K562 (cell line): ENCODE measurements at regions of chr1 and their contacts with region 1.

Region 1: DNA sequence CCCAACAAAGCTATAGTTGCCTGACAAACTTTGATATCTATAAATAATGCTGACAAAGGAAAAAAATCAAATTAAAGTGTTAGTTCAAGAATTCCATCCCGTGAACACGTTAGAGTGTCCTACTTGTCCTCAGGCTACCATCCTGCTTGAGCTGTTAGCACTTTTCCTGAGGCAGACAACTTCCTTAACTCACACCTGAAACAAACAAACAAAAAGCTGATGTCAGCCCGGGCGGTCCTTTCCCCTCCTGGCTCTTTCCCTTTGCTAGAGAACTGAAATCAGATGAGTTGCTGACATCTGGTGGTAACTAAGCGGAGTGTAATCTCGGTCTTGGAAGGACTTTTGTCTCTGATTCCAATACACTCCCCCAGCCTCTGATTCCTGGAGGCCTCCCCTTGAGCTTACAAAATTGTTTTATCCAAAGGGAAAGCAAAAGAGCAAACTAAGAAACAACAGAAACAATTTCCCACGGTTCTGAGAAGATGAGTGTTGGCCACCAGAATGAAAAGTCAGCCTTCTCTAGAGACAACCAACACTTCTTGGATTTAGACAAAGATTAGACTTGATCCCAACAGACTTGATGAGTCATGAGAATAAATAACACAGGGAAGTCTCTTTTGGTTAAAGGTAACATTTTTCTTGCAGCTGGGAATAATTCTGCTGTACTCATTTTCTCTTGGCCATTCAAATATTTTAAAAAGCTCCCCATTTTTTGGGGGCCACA is 135.4 kb downstream of the PROX1 start:
- DNase-seq: peak; percentile 24 to 61 (median 45)
- ATAC-seq: peak; percentile 97
- H3K4me3 ChIP-seq: no peak overlapping the region
- H3K27ac ChIP-seq: no peak overlapping the region
- H3K4me1 ChIP-seq: no peaks in the 10 kb centered on the region; a peak in 1 of 5 replicates
- H3K27me3 ChIP-seq: peaks cover 0 to 5% of the 10 kb centered on the region in 2 experiments; a peak in 3 of 5 replicates
- CTCF ChIP-seq: peak; percentile 51 to 69 (median 56)
- EP300 ChIP-seq: no peak
- POLR2A ChIP-seq: no peak
- RAD21 ChIP-seq: peak; percentile 92 to 93

Region 2: GRCh38 chr1:213122514-213122929 is 1000.7 kb before region 1 on chr1:
- CTCF ChIA-PET with region 1: no interaction called
- POLR2A ChIA-PET with region 1: no interaction called
- in situ Hi-C with region 1: no loop called
- intact Hi-C with region 1: loop called (anchors 5 kb)
- DNase-seq: peak; percentile 19 to 77 (median 26)
- ATAC-seq: 0 out of 3 replicates have a peak, but pooled peaks have one; percentile 21
- H3K4me3 ChIP-seq: no peak overlapping the region
- H3K27ac ChIP-seq: peak overlapping the region; percentile 10; the same call in 2 of the 3 replicates
- H3K4me1 ChIP-seq: peaks cover 0 to 31% of the 10 kb centered on the region in 2 experiments
- H3K27me3 ChIP-seq: no peaks in the 10 kb centered on the region
- CTCF ChIP-seq: peak in 2 of 3 experiments; percentile 29 to 70; a peak in 4 of 6 replicates
- EP300 ChIP-seq: no peak
- POLR2A ChIP-seq: no peak
- RAD21 ChIP-seq: peak; percentile 45 to 66

Region 3: GRCh38 chr1:213564215-213564659 is 559.0 kb before region 1 on chr1:
- CTCF ChIA-PET with region 1: no interaction called
- POLR2A ChIA-PET with region 1: interaction called, 3 read pairs
- in situ Hi-C with region 1: no loop called
- intact Hi-C with region 1: loop called (anchors 1 kb)
- DNase-seq: peak in 2 of 4 experiments; percentile 18 to 32
- ATAC-seq: peak; percentile 39; the same call in 1 of the 3 replicates
- H3K4me3 ChIP-seq: no peak overlapping the region
- H3K27ac ChIP-seq: no peak overlapping the region
- H3K4me1 ChIP-seq: no peaks in the 10 kb centered on the region
- H3K27me3 ChIP-seq: no peaks in the 10 kb centered on the region
- CTCF ChIP-seq: peak; percentile 32 to 70 (median 62); a peak in 4 of 6 replicates
- EP300 ChIP-seq: no peak
- POLR2A ChIP-seq: no peak
- RAD21 ChIP-seq: peak; percentile 81